ENCODE measurements at regions of chr16 and their contacts with region 1.

Region 1: GRCh38 chr16:1929578-1930337 is 11.5 kb upstream of the HS3ST6 start:
- DNase-seq: peak; percentile 89
- H3K4me3 ChIP-seq: peak overlapping the region; percentile 48
- H3K27ac ChIP-seq: peak overlapping the region; percentile 58
- H3K4me1 ChIP-seq: peaks cover 5% of the 10 kb centered on the region
- H3K27me3 ChIP-seq: no peaks in the 10 kb centered on the region
- CTCF ChIP-seq: peak; percentile 69

Region 2: GRCh38 chr16:1745900-1746692 is 183.7 kb before region 1 on chr16:
- CTCF ChIA-PET with region 1: interaction called, 10 read pairs
- POLR2A ChIA-PET with region 1: no interaction called
- intact Hi-C with region 1: no loop called
- DNase-seq: peak; percentile 38
- H3K4me3 ChIP-seq: no peak overlapping the region
- H3K27ac ChIP-seq: peak overlapping the region; percentile 30
- H3K4me1 ChIP-seq: no peaks in the 10 kb centered on the region
- H3K27me3 ChIP-seq: no peaks in the 10 kb centered on the region
- CTCF ChIP-seq: no peak

Region 3: DNA sequence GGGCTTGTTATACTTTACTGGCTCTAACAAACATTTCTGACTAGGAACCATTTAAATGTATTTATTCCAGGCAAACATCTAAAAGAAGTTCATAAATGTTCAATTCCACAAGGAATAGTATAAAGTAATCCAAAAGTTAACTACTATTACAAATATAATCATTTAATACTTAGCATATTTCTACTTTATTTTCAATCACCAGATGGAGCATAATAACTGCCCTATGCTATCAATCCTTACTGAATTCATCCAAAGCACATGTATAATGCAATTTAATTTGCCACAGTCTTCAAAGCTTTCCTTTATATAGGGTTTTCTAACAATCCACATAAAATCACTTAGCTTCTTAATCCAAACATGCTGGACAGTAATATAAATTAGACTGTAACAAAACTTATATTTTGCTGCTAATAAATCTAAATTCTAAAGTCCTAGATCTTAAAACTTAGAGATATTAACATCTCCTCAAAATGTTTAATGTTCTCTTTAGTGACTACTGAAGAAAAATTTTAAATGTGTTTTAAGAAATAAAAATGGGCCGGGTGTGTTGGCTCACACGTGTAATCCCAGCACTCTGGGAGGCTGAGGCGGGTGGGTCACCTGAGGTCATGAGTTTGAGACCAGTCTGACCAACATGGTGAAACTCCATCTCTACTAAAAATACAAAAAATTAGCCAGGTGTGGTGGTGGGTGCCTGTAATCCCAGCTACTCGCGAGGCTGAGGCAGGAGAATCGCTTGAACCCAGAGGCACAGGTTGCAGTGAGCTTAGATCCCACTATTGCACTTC is 63.7 kb before region 1 on chr16:
- CTCF ChIA-PET with region 1: no interaction called
- POLR2A ChIA-PET with region 1: no interaction called
- intact Hi-C with region 1: loop called (anchors 5 kb)
- DNase-seq: no peak
- H3K4me3 ChIP-seq: no peak overlapping the region
- H3K27ac ChIP-seq: no peak overlapping the region
- H3K4me1 ChIP-seq: no peaks in the 10 kb centered on the region
- H3K27me3 ChIP-seq: no peaks in the 10 kb centered on the region
- CTCF ChIP-seq: no peak

Region 4: DNA sequence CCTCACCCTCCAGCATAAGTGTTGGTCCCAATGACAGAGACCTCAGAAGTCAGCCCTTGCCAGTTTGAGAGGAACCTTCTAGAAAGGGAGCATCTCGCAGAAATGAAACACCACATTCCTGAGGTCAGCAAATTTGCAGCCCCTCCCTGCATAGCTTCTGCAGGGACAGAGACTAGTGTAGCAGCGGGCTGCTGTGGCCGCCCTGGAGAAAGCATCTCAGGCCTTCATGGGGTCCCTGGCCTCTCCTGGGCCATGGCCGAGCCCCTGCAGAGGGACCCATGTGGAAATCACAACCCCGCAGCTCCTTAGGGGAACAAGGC is 23.0 kb before region 1 on chr16:
- CTCF ChIA-PET with region 1: no interaction called
- POLR2A ChIA-PET with region 1: interaction called, 15 read pairs
- intact Hi-C with region 1: no loop called
- DNase-seq: no peak
- H3K4me3 ChIP-seq: no peak overlapping the region
- H3K27ac ChIP-seq: no peak overlapping the region
- H3K4me1 ChIP-seq: no peaks in the 10 kb centered on the region
- H3K27me3 ChIP-seq: no peaks in the 10 kb centered on the region
- CTCF ChIP-seq: no peak

Region 5: DNA sequence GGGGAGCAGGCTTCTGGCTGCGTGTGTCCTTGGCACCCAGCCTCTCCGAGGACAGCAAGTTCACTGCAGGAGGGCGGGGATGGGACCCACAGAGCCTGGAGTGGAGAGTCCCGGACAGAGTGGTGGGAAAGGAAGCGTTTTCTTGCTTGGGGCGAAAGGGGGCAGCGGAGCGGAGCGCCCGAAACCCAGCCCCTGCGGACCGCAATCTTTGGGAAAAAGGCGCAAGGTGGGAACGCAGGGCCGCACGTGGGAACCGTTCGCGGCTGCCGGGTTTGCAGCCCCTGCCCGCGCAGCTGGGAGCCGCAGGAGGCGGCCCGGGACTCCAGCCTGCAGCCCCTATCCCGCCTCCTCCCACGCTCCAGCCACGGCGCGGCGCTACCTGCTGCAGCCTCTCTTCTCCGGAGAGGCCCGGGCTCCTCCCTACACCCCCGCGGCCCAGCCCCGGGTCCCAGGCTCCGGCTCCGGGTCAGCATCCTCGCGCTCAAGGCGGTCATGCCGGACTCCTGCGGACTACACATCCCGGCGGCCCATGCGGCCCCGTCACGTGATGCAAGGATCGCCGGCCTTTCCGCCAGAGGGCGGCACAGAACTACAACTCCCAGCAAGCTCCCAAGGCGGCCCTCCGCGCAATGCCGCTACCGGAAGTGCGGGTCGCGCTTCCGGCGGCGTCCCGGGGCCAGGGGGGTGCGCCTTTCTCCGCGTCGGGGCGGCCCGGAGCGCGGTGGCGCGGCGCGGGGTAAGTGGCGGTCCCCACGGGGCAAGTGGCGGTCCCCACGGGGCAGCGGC is 117.8 kb after region 1 on chr16 and contains the starts of genes NTHL1 and TSC2:
- CTCF ChIA-PET with region 1: no interaction called
- POLR2A ChIA-PET with region 1: no interaction called
- intact Hi-C with region 1: no loop called
- DNase-seq: peak; percentile 97
- H3K4me3 ChIP-seq: peak within 1 kb of the TSS; percentile 93
- H3K27ac ChIP-seq: peak within 1 kb of the TSS; percentile 67
- H3K4me1 ChIP-seq: no peaks in the 10 kb centered on the region
- H3K27me3 ChIP-seq: no peaks in the 10 kb centered on the region
- CTCF ChIP-seq: no peak; the same call in 1 of the 2 replicates
- total RNA-seq, gene NTHL1: 51.6 and 65.4 TPM in 2 replicates
- total RNA-seq, gene TSC2: 125 and 155 TPM in 2 replicates

Measured in A673 (cell line).